ENCODE measurements at regions of chr3 and their contacts with region 1.

Region 1: GRCh38 chr3:56339671-56340070 is 128.6 kb downstream of the ERC2 start:
- H3K4me3 ChIP-seq: no peak overlapping the region
- H3K27ac ChIP-seq: no peak overlapping the region
- H3K4me1 ChIP-seq: no peaks in the 10 kb centered on the region
- CTCF ChIP-seq: no peak

Region 2: GRCh38 chr3:56323986-56324420 is 15.7 kb before region 1 on chr3:
- CTCF ChIA-PET with region 1: interaction called, 23 read pairs
- POLR2A ChIA-PET with region 1: no interaction called
- H3K4me3 ChIP-seq: no peak overlapping the region
- H3K27ac ChIP-seq: no peak overlapping the region
- H3K4me1 ChIP-seq: no peaks in the 10 kb centered on the region
- CTCF ChIP-seq: no peak

Region 3: GRCh38 chr3:56357266-56357665 is 17.6 kb after region 1 on chr3:
- CTCF ChIA-PET with region 1: interaction called, 11 read pairs
- POLR2A ChIA-PET with region 1: no interaction called
- H3K4me3 ChIP-seq: no peak overlapping the region
- H3K27ac ChIP-seq: no peak overlapping the region
- H3K4me1 ChIP-seq: no peaks in the 10 kb centered on the region
- CTCF ChIP-seq: no peak

Region 4: DNA sequence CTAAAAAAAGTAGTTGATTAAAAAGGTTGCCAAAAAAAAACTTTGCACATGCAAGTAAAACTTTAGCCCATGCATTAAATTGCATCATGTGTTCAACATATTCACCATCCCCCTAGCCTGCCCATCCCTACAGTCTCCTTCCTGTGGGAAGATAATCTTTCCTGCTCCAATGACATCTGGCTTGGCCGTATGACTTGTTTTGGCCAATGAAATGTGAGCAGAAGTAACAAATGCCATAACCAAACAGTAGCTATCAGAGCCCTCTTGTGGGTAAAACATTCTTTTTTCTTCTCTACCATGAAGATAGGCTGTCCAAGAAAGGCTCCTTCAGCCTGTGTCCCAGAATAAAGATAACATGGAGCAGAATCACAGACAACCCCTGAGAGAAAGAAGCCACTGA is 113.3 kb after region 1 on chr3:
- CTCF ChIA-PET with region 1: interaction called, 30 read pairs
- POLR2A ChIA-PET with region 1: no interaction called
- H3K4me3 ChIP-seq: no peak overlapping the region
- H3K27ac ChIP-seq: no peak overlapping the region
- H3K4me1 ChIP-seq: 0 out of 2 replicates have a peak, but pooled peaks cover 4% of the 10 kb centered on the region
- CTCF ChIP-seq: no peak

Region 5: GRCh38 chr3:57464801-57465200 is 1125.1 kb after region 1 on chr3:
- CTCF ChIA-PET with region 1: no interaction called
- POLR2A ChIA-PET with region 1: no interaction called
- H3K4me3 ChIP-seq: no peak overlapping the region
- H3K27ac ChIP-seq: no peak overlapping the region
- H3K4me1 ChIP-seq: no peaks in the 10 kb centered on the region
- CTCF ChIP-seq: no peak

Measured in HEK293 (cell line).